Activated naive CD4-positive, alpha-beta T cell treated with anti-CD3 and anti-CD28 coated beads, Interleukin-2, amount 10 ng/mL, durations not matched to agents 7 days and 5 days (primary cell): ENCODE measurements at regions of chr20 and their contacts with region 1.

Region 1: GRCh38 chr20:50980851-50981713 is 22.5 kb downstream of the MOCS3 start:
- DNase-seq: peak; percentile 76
- H3K4me3 Mint-ChIP-seq: no peak overlapping the region
- H3K27ac Mint-ChIP-seq: no peak overlapping the region
- H3K4me1 Mint-ChIP-seq: peaks cover 2% of the 10 kb centered on the region
- H3K27me3 Mint-ChIP-seq: peaks cover 60% of the 10 kb centered on the region

Region 2: DNA sequence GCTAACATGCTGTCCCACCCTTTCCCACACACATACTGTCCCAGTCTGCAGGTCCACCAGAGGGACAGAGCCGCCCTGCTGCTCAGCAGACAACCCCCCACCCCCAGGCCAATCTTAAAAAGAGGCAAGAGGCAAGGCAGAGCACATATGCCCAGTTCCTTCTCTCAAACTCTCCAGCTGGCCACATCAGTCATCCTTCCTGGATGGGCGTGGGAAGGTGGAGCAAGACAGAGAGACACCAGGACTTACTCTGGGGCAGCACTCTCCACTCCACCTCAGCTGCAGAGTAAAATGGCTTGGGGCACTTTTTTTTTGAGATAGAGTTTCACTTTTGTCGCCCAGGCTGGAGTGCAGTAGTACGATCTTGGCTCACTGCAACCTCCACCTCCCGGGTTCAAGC is 11.6 kb before region 1 on chr20:
- CTCF ChIA-PET with region 1: interaction called, 14 read pairs
- DNase-seq: no peak
- H3K4me3 Mint-ChIP-seq: no peak overlapping the region
- H3K27ac Mint-ChIP-seq: no peak overlapping the region
- H3K4me1 Mint-ChIP-seq: no peaks in the 10 kb centered on the region
- H3K27me3 Mint-ChIP-seq: peaks cover 20% of the 10 kb centered on the region

Region 3: DNA sequence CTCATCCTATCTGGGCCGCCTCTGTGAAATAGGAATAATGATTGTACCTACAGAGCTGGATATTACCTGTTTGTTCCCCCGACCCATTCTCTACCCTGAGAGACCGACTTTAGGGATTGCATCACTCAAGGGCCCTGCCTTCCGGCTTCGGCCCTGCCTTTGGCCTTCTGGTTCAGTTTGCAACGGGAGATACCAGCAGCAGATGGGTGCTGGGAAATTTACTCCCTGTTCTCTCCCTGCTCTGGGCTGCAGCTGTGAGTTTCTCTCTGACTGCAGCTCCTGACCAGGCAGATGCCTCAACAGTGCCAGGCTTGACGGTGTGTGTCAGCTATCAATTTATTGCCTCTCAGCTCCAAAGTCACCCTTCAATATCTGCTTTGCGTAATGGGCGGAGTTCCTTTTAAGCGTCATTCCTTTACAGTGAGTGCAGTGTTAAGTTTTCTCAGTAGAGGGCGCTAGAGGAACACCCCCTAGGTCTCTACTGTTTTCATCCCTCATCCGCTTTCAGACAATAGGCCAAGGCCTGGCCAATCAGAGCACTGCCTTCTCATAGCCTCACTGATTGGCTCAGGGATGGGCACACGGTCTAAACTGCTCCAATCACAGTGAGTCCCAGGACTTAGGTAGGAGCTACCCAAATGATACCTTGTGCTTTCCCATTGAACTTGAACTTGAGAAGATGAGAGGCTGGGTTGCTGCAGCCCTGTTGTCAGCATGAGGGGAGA is 11.8 kb after region 1 on chr20:
- CTCF ChIA-PET with region 1: interaction called, 41 read pairs
- DNase-seq: peak; percentile 60
- H3K4me3 Mint-ChIP-seq: no peak overlapping the region
- H3K27ac Mint-ChIP-seq: no peak overlapping the region
- H3K4me1 Mint-ChIP-seq: no peaks in the 10 kb centered on the region
- H3K27me3 Mint-ChIP-seq: peaks cover 38% of the 10 kb centered on the region